Mammary epithelial cell (primary cell): ENCODE measurements at regions of chr16 and their contacts with region 1.

Region 1: GRCh38 chr16:77660311-77660710 is 62.0 kb upstream of the NUDT7 start:
- DNase-seq: peak; percentile 33
- H3K4me3 ChIP-seq: no peak overlapping the region
- H3K27ac ChIP-seq: no peak overlapping the region
- H3K4me1 ChIP-seq: no peaks in the 10 kb centered on the region
- H3K27me3 ChIP-seq: no peaks in the 10 kb centered on the region
- CTCF ChIP-seq: peak; percentile 42 to 75

Region 2: GRCh38 chr16:76985392-76986045 is 674.8 kb before region 1 on chr16:
- CTCF ChIA-PET with region 1: no interaction called
- dilution Hi-C with region 1: no loop called
- in situ Hi-C with region 1: no loop called
- intact Hi-C with region 1: no loop called
- DNase-seq: no peak
- H3K4me3 ChIP-seq: no peak overlapping the region
- H3K27ac ChIP-seq: no peak overlapping the region
- H3K4me1 ChIP-seq: no peaks in the 10 kb centered on the region
- H3K27me3 ChIP-seq: no peaks in the 10 kb centered on the region
- CTCF ChIP-seq: no peak

Region 3: DNA sequence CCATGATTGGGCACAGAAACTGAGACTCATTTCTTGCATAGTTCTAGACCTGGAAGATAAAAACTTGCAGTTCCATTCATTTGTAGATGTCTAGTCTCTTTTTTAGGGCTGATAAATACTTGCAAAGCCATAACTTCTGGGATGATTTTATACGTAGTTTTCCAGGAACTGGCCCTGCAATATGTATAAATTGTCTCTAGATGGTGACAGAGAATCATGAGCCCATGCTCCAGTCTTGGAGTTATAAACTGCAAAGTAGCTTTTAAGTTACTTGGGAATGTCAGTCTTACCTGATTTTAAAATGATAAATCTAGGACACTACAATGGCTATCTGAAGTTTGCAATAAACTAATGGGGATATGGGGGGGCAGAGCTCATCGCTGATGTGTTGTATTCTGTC is 222.5 kb before region 1 on chr16:
- CTCF ChIA-PET with region 1: no interaction called
- dilution Hi-C with region 1: no loop called
- in situ Hi-C with region 1: no loop called
- intact Hi-C with region 1: loop called (anchors 5 kb)
- DNase-seq: no peak
- H3K4me3 ChIP-seq: no peak overlapping the region
- H3K27ac ChIP-seq: no peak overlapping the region
- H3K4me1 ChIP-seq: no peaks in the 10 kb centered on the region
- H3K27me3 ChIP-seq: peaks cover 5% of the 10 kb centered on the region
- CTCF ChIP-seq: no peak

Region 4: DNA sequence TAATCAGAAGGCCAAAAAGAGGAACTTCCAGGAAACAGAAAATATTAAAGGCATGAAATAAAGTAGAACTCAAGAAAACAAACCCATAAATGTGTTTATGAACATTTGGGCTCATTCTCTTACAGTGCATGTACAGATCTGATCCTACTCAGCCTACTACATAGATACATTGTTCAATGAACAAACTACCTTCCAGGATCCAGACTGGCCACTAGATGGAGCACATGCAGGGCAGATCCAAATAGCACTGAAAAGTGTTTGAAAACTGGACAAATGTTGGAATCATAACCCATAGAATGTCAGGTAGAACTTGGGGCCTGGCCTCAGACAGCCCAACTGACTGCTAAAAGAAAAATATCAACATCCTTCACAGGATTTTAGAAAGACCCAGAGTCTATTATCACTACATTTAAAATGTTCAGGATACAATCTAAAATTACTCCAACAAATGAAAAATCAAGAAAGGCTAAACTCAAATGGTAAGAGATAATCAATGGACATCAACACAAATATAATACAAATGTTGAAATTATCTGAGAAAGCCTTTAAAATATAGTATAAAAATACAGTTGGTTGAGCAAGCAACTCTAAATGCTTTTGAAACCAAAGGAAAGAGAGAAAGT is 60.4 kb before region 1 on chr16:
- CTCF ChIA-PET with region 1: no interaction called
- dilution Hi-C with region 1: no loop called
- in situ Hi-C with region 1: loop called in 1 of 2 experiments (anchors 10 kb)
- intact Hi-C with region 1: loop called (anchors 1 kb)
- DNase-seq: peak; percentile 26
- H3K4me3 ChIP-seq: no peak overlapping the region
- H3K27ac ChIP-seq: no peak overlapping the region
- H3K4me1 ChIP-seq: peaks cover 4% of the 10 kb centered on the region
- H3K27me3 ChIP-seq: no peaks in the 10 kb centered on the region
- CTCF ChIP-seq: peak; percentile 91 to 92